CD8-positive, alpha-beta T cell (primary cell): ENCODE measurements at regions of chr15 and their contacts with region 1.

Region 1: DNA sequence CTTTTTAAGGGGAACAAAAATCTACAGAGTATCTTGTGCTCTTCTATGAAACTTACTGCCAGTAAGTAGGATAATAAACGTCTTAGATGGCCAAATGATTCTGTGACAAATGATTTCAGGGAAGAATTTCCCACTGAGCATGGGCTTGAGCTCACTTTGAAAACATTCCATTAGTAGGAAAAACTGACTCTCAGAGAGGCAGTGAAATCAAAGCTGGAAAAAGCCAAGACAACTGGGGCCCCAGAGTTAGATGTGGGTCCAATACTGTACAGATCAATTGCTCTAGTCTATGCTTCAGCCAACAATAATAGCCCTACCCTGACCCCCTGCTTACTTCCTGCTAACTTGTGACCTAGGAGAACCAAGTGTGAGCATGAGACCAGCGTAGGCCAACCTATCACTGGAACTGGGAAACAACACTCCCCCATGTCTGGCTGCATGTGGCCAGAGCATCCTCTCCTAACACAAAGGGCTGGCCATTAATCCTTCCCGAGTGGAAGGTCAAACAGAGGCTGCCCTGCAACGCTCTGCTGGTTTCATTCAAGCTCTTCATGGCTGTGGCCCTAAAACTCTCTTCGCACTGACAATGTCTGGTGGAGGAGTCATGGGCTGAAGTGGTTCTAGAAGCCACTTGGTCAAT is 68.8 kb downstream of the FOXB1 start:
- DNase-seq: no peak
- ATAC-seq: no peak
- H3K4me3 ChIP-seq: no peak overlapping the region
- H3K4me3 Mint-ChIP-seq: no peak overlapping the region
- H3K27ac ChIP-seq: no peak overlapping the region
- H3K27ac Mint-ChIP-seq: no peak overlapping the region
- H3K4me1 ChIP-seq: peaks cover 4% of the 10 kb centered on the region
- H3K4me1 Mint-ChIP-seq: peaks cover 25% of the 10 kb centered on the region
- H3K27me3 ChIP-seq: no peaks in the 10 kb centered on the region
- H3K27me3 Mint-ChIP-seq: peaks cover 7% of the 10 kb centered on the region
- CTCF ChIP-seq: no peak

Region 2: DNA sequence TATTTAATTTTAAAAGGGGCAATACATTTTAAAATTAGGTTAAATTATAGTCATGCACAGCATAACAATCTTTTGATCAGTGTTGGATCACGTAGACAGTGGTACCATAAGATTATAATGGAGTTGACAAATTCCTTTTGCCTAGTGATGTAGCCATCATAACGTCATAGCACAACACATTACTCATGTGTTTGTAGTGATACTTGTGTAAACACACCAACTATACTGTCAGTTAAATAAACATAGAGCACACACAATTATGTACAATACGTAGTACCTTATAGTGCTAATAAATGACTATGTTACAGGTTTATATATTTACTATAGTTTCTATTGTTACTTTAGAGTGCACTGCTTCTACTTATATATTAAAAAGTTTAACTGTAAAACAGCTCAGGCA is 37.6 kb before region 1 on chr15:
- CTCF ChIA-PET with region 1: no interaction called
- POLR2A ChIA-PET with region 1: no interaction called
- intact Hi-C with region 1: no loop called
- DNase-seq: no peak
- ATAC-seq: no peak
- H3K4me3 ChIP-seq: no peak overlapping the region
- H3K4me3 Mint-ChIP-seq: no peak overlapping the region
- H3K27ac ChIP-seq: no peak overlapping the region
- H3K27ac Mint-ChIP-seq: no peak overlapping the region
- H3K4me1 ChIP-seq: no peaks in the 10 kb centered on the region
- H3K4me1 Mint-ChIP-seq: no peaks in the 10 kb centered on the region
- H3K27me3 ChIP-seq: no peaks in the 10 kb centered on the region
- H3K27me3 Mint-ChIP-seq: peaks cover 7% of the 10 kb centered on the region
- CTCF ChIP-seq: no peak

Region 3: DNA sequence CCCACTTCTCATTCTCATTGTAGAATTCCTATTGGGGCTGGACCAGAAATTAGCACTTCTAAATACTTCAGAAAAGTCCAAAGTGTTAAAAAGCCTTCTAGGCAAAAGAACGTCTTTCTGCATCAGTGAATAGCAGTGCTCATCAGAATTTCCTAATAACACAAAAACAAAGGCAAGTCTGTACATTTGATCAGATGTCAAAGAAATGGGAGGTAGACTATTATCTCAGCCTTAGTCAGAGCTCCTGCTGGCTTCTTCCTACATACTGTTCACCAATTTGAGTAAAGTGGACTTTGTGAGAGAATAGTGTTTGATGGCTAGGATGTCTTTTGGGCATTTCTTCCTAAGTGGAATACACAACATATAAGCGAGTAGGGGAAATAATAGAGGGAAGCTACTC is 20.1 kb before region 1 on chr15:
- CTCF ChIA-PET with region 1: no interaction called
- POLR2A ChIA-PET with region 1: no interaction called
- intact Hi-C with region 1: loop called in 1 of 2 experiments (anchors 2 kb)
- DNase-seq: no peak
- ATAC-seq: no peak
- H3K4me3 ChIP-seq: no peak overlapping the region
- H3K4me3 Mint-ChIP-seq: no peak overlapping the region
- H3K27ac ChIP-seq: no peak overlapping the region
- H3K27ac Mint-ChIP-seq: no peak overlapping the region
- H3K4me1 ChIP-seq: no peaks in the 10 kb centered on the region
- H3K4me1 Mint-ChIP-seq: no peaks in the 10 kb centered on the region
- H3K27me3 ChIP-seq: peaks cover 2 to 4% of the 10 kb centered on the region in 2 experiments
- H3K27me3 Mint-ChIP-seq: peaks cover 24% of the 10 kb centered on the region
- CTCF ChIP-seq: no peak